ENCODE measurements at regions of chr2 and their contacts with region 1.

Region 1: GRCh38 chr2:96272004-96272403 is 6.0 kb downstream of the CIAO1 start:
- DNase-seq: no peak
- H3K4me3 ChIP-seq: no peak overlapping the region
- H3K27ac ChIP-seq: no peak overlapping the region
- H3K4me1 ChIP-seq: peaks cover 0 to 4% (median 0%) of the 10 kb centered on the region in 4 experiments; a peak in 2 of 7 replicates
- H3K27me3 ChIP-seq: no peaks in the 10 kb centered on the region
- CTCF ChIP-seq: no peak
- EP300 ChIP-seq: no peak
- POLR2A ChIP-seq: no peak
- RAD21 ChIP-seq: no peak; a peak in 1 of 4 replicates

Region 2: GRCh38 chr2:96291751-96292150 is 19.7 kb after region 1 on chr2:
- CTCF ChIA-PET with region 1: interaction called, 3 read pairs
- POLR2A ChIA-PET with region 1: interaction called, 42 read pairs
- DNase-seq: no peak
- H3K4me3 ChIP-seq: no peak overlapping the region
- H3K27ac ChIP-seq: no peak overlapping the region
- H3K4me1 ChIP-seq: no peaks in the 10 kb centered on the region
- H3K27me3 ChIP-seq: no peaks in the 10 kb centered on the region
- CTCF ChIP-seq: no peak
- EP300 ChIP-seq: no peak
- POLR2A ChIP-seq: no peak
- RAD21 ChIP-seq: no peak

Region 3: GRCh38 chr2:96565111-96565510 is 293.1 kb after region 1 on chr2:
- CTCF ChIA-PET with region 1: no interaction called
- POLR2A ChIA-PET with region 1: no interaction called
- DNase-seq: peak in 1 of 2 experiments; percentile 48
- H3K4me3 ChIP-seq: no peak overlapping the region
- H3K27ac ChIP-seq: no peak overlapping the region
- H3K4me1 ChIP-seq: peaks cover 0 to 8% (median 6%) of the 10 kb centered on the region in 4 experiments; a peak in 4 of 7 replicates
- H3K27me3 ChIP-seq: no peaks in the 10 kb centered on the region
- CTCF ChIP-seq: no peak
- EP300 ChIP-seq: no peak
- POLR2A ChIP-seq: no peak
- RAD21 ChIP-seq: no peak

Measured in H1 (cell line).